ENCODE measurements at regions of chr10 and their contacts with region 1.

Region 1: DNA sequence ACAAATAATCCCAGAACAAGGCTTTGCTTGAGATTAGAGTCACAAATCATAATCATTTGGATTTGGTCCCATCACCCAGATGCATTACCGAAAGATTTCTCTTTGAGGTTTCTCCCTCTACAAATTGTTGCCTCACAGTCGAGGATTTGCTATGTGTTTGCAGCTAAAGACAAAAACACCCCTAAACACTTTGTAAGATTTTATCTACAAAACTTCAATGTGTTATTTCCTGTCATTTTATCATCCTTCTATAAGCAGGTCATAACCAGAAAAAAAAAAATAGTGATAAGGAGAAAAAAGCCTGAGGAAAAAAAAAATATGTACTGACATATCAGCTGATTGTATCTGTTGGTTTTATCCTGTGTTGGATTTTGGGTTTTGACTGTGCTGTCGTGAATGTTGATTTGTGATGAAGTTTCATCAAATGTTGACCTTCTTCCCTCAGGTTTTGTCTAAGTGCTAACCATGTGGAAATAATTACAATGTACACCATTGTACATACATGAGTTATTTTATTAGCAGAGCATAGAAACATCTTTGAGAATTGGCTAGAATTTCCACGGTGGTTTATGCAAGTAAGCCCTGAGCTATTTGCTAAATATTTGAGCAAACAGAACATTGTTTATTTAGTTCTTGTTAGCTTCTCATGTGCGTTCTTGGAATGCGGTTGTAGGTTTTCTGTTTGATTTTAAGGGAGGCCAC is 274.4 kb downstream of the NEBL start:
- DNase-seq: no peak
- H3K4me3 ChIP-seq: no peak overlapping the region
- H3K27ac ChIP-seq: peak overlapping the region; percentile 36 to 58
- H3K4me1 ChIP-seq: peaks cover 2 to 16% of the 10 kb centered on the region in 2 donors
- H3K27me3 ChIP-seq: no peaks in the 10 kb centered on the region
- CTCF ChIP-seq: no peak

Region 2: DNA sequence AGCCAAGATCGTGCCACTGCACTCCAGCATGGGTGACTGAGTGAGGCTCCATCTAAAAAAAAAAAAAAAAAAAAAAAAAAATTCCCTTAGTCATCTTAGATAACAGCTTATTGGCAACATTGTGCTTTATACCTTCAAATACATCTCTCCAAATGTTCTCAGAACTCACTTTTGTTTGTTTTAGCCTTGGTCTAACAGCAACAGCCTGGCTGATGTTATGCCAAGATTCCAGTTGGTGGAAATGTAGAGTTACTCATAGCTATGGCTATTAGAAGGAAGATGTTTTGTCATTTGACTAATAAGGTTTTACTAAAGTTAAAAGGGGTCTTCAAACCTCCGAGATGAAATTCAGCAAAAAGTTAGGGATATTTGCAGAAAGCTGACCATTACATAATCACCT is 207.0 kb before region 1 on chr10:
- intact Hi-C with region 1: loop called (anchors 10 kb)
- DNase-seq: peak in 1 of 2 donors; percentile 64
- H3K4me3 ChIP-seq: no peak overlapping the region
- H3K27ac ChIP-seq: peak overlapping the region; percentile 70 to 75
- H3K4me1 ChIP-seq: no peaks in the 10 kb centered on the region
- H3K27me3 ChIP-seq: no peaks in the 10 kb centered on the region
- CTCF ChIP-seq: no peak

Region 3: GRCh38 chr10:20768843-20769242 is 146.2 kb after region 1 on chr10:
- intact Hi-C with region 1: loop called (anchors 10 kb)
- DNase-seq: no peak
- H3K4me3 ChIP-seq: no peak overlapping the region
- H3K27ac ChIP-seq: no peak overlapping the region
- H3K4me1 ChIP-seq: peaks cover 0 to 14% of the 10 kb centered on the region in 2 donors
- H3K27me3 ChIP-seq: no peaks in the 10 kb centered on the region
- CTCF ChIP-seq: peak; percentile 33 to 73 (median 33)